Common myeloid progenitor, CD34-positive (primary cell): ENCODE measurements at regions of chr2 and their contacts with region 1.

Region 1: GRCh38 chr2:182186132-182186735 is 200.6 kb downstream of the PPP1R1C start:
- DNase-seq: peak; percentile 28 to 58 (median 48)
- H3K4me3 ChIP-seq: no peak overlapping the region
- H3K27ac ChIP-seq: no peak overlapping the region
- H3K4me1 ChIP-seq: no peaks in the 10 kb centered on the region
- H3K27me3 ChIP-seq: no peaks in the 10 kb centered on the region

Region 2: DNA sequence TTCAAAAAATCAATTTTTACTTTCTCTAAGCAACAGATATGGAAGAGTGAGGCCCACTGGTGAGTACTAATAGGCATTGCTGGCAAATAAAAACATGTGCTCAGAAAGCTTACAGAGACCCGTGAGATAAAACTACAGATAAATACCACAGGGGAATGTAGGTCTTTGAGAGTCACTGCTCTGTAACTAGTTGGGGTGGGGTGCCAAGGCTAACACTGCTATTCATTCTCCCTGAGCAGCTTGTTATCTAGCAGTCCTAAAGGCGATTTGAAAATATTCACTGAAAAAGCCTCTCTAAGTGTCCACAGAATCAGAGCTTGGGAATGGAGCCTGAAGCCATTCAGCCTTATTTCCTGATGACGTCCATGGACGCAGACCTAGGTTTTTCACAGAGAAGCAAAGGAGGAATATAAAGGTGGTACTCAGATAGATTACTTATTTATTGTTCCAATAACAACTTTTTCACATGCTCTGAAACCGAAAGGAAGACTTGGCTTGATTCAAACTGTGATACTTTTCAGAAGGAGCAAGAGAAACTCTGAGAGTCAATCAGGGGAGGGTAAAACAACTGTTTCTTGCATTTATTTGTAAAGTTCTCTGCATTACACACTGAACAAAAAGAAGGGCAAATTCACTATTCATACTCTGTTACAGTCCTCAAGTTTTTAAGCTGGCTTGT is 12.2 kb before region 1 on chr2:
- CTCF ChIA-PET with region 1: no interaction called
- POLR2A ChIA-PET with region 1: no interaction called
- DNase-seq: no peak
- H3K4me3 ChIP-seq: no peak overlapping the region
- H3K27ac ChIP-seq: no peak overlapping the region
- H3K4me1 ChIP-seq: no peaks in the 10 kb centered on the region
- H3K27me3 ChIP-seq: no peaks in the 10 kb centered on the region

Region 3: DNA sequence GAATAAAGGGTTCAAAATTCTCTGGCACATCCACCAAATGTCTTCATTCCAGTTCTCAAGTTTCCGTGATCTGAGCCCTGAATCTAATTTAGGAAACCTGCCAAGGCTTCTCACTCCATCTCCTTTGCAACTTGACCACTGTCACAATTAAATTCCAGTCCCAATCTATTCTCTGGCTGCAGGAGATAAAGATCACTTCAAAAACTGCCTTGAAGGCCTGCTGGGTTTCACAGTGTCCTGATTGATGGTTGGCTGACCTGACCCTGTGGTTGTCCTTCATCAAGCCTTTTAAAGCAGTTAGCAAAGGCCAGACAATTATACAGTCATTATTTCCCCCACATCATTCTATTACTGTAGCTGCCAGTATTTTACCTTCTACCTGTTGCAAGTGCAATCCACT is 469.5 kb after region 1 on chr2:
- CTCF ChIA-PET with region 1: interaction called, 24 read pairs
- POLR2A ChIA-PET with region 1: no interaction called
- DNase-seq: no peak
- H3K4me3 ChIP-seq: no peak overlapping the region
- H3K27ac ChIP-seq: no peak overlapping the region
- H3K4me1 ChIP-seq: no peaks in the 10 kb centered on the region
- H3K27me3 ChIP-seq: no peaks in the 10 kb centered on the region